HEK293 (cell line): ENCODE measurements at regions of chr9 and their contacts with region 1.

Region 1: DNA sequence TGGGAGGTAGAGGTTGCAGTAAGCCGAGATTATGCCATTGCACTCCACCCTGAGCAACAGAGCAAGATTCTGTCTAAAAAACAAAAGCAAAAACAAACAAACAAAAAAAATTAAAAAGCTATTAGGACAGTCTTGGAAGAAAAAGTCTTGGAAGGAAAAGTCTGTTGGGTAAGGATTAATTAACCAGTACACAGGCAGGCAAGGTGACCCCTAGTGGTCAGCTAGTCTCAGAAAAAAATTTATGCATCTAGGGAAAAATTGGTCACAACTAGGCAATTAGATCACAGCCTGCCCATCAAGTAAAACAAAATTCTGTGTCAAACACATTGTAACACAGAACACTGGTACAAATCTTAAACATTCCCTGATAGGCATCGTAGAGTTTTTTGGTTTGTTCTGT is 6.7 kb upstream of the ANKRD18B start:
- H3K4me3 ChIP-seq: no peak overlapping the region
- H3K27ac ChIP-seq: no peak overlapping the region
- H3K4me1 ChIP-seq: no peaks in the 10 kb centered on the region
- CTCF ChIP-seq: no peak

Region 2: GRCh38 chr9:33498387-33498786 is 19.0 kb before region 1 on chr9:
- CTCF ChIA-PET with region 1: interaction called, 14 read pairs
- POLR2A ChIA-PET with region 1: no interaction called
- H3K4me3 ChIP-seq: no peak overlapping the region
- H3K27ac ChIP-seq: no peak overlapping the region
- H3K4me1 ChIP-seq: 0 out of 2 replicates have a peak, but pooled peaks cover 3% of the 10 kb centered on the region
- CTCF ChIP-seq: no peak